K562 (cell line): ENCODE measurements at regions of chr9 and their contacts with region 1.

Region 1: GRCh38 chr9:131053896-131054295 is 42.4 kb upstream of the AIF1L start:
- DNase-seq: no peak
- ATAC-seq: no peak
- H3K4me3 ChIP-seq: no peak overlapping the region
- H3K27ac ChIP-seq: no peak overlapping the region
- H3K4me1 ChIP-seq: peaks cover 0 to 15% of the 10 kb centered on the region in 2 experiments; a peak in 2 of 5 replicates
- H3K27me3 ChIP-seq: peaks cover 70 to 87% of the 10 kb centered on the region in 2 experiments
- CTCF ChIP-seq: no peak
- EP300 ChIP-seq: no peak
- POLR2A ChIP-seq: no peak
- RAD21 ChIP-seq: no peak

Region 2: DNA sequence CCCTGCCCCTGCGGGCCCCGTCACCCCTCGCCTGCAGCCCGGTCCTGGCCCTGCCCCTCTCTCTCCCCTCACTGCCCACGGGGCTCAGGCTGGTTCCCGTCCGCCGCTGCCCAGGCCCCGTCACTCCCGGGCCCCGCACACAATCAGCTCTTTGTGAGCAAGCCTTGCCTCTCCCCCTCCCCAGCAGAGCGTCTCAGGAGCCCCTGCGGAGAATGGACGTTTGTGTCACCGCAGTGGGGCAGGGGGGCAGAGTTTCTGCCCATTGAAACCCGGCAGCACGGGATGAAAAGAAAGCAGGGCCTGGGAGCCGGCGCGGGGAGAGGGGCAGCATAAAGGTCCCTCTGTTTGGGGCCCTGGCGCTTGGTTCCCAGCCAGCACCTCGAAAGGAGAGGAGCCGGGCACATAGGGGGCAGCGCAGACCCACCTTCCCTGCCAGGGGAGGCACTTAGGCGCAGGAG is 58.0 kb after region 1 on chr9:
- CTCF ChIA-PET with region 1: interaction called, 6 read pairs
- POLR2A ChIA-PET with region 1: interaction called, 3,336 read pairs
- in situ Hi-C with region 1: no loop called
- intact Hi-C with region 1: loop called (anchors 2 kb)
- DNase-seq: peak in 1 of 4 experiments; percentile 63
- ATAC-seq: no peak; the same call in 2 of the 3 replicates
- H3K4me3 ChIP-seq: no peak overlapping the region
- H3K27ac ChIP-seq: no peak overlapping the region
- H3K4me1 ChIP-seq: peaks cover 0 to 18% of the 10 kb centered on the region in 2 experiments; a peak in 2 of 5 replicates
- H3K27me3 ChIP-seq: peaks cover 89 to 98% of the 10 kb centered on the region in 2 experiments
- CTCF ChIP-seq: no peak
- EP300 ChIP-seq: no peak
- POLR2A ChIP-seq: no peak
- RAD21 ChIP-seq: no peak

Region 3: DNA sequence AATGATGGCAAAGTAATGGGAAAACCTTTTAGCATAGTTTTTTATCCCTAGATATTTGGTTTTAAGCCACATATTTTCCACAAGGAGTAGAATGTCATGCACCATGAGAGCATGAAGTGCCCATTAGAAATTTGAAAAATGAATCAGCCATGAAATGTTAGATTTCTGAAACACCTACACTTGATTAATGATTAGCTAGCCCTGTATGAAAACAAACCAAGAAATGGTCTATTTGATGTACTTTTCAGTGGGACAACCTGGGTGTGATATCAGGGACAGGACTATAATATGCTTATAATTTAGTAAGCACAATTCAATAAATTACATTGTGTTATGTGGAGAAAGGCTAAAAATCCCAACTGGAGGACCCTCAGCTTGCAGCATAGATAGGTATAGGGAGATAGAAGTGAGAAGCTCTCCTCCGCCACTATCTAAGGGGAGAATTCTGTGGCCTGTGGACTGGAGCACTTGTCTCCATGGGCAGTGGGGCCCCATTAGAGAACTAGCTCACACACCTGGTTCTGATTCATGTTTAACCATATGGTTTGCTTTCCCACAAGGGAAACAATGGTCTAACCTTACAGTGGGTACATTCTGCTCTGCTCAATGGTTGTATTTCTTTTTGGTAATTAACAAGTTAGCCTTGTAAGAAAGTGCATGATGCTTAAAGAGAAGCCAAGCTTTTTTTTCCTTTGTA is 106.7 kb after region 1 on chr9:
- CTCF ChIA-PET with region 1: no interaction called
- POLR2A ChIA-PET with region 1: no interaction called
- in situ Hi-C with region 1: no loop called
- intact Hi-C with region 1: loop called (anchors 2 kb)
- DNase-seq: peak in 3 of 4 experiments; percentile 68 to 81 (median 78)
- ATAC-seq: peak; percentile 13
- H3K4me3 ChIP-seq: no peak overlapping the region
- H3K27ac ChIP-seq: no peak overlapping the region
- H3K4me1 ChIP-seq: no peaks in the 10 kb centered on the region
- H3K27me3 ChIP-seq: no peaks in the 10 kb centered on the region
- CTCF ChIP-seq: no peak
- EP300 ChIP-seq: no peak
- POLR2A ChIP-seq: no peak
- RAD21 ChIP-seq: no peak

Region 4: GRCh38 chr9:131203431-131204218 is 149.7 kb after region 1 on chr9:
- CTCF ChIA-PET with region 1: interaction called, 3 read pairs
- POLR2A ChIA-PET with region 1: interaction called, 3 read pairs
- in situ Hi-C with region 1: no loop called
- intact Hi-C with region 1: loop called (anchors 1 kb)
- DNase-seq: peak; percentile 66 to 83 (median 76)
- ATAC-seq: peak; percentile 86
- H3K4me3 ChIP-seq: no peak overlapping the region
- H3K27ac ChIP-seq: no peak overlapping the region
- H3K4me1 ChIP-seq: no peaks in the 10 kb centered on the region
- H3K27me3 ChIP-seq: no peaks in the 10 kb centered on the region
- CTCF ChIP-seq: no peak
- EP300 ChIP-seq: no peak
- POLR2A ChIP-seq: no peak
- RAD21 ChIP-seq: no peak

Region 5: GRCh38 chr9:131277910-131278701 is 224.2 kb after region 1 on chr9:
- CTCF ChIA-PET with region 1: interaction called, 3 read pairs
- POLR2A ChIA-PET with region 1: no interaction called
- in situ Hi-C with region 1: no loop called
- intact Hi-C with region 1: loop called (anchors 2 kb)
- DNase-seq: peak; percentile 100
- ATAC-seq: peak; percentile 65
- H3K4me3 ChIP-seq: peak overlapping the region; percentile 65
- H3K27ac ChIP-seq: peak overlapping the region; percentile 75
- H3K4me1 ChIP-seq: peaks cover 28 to 75% of the 10 kb centered on the region in 2 experiments
- H3K27me3 ChIP-seq: peaks cover 3 to 13% of the 10 kb centered on the region in 2 experiments; a peak in 3 of 5 replicates
- CTCF ChIP-seq: no peak; a peak in 1 of 6 replicates
- EP300 ChIP-seq: peak; percentile 40; the same call in 1 of the 2 replicates
- POLR2A ChIP-seq: no peak
- RAD21 ChIP-seq: no peak

Region 6: GRCh38 chr9:131334629-131335367 is 280.9 kb after region 1 on chr9:
- CTCF ChIA-PET with region 1: interaction called, 16 read pairs
- POLR2A ChIA-PET with region 1: interaction called, 3 read pairs
- in situ Hi-C with region 1: loop called (anchors 5 kb)
- intact Hi-C with region 1: loop called (anchors 1 kb)
- DNase-seq: peak in 3 of 4 experiments; percentile 24 to 26 (median 25)
- ATAC-seq: 0 out of 3 replicates have a peak, but pooled peaks have one; percentile 3
- H3K4me3 ChIP-seq: no peak overlapping the region
- H3K27ac ChIP-seq: no peak overlapping the region
- H3K4me1 ChIP-seq: peaks cover 21 to 45% of the 10 kb centered on the region in 2 experiments; a peak in 4 of 5 replicates
- H3K27me3 ChIP-seq: no peaks in the 10 kb centered on the region
- CTCF ChIP-seq: no peak
- EP300 ChIP-seq: no peak
- POLR2A ChIP-seq: no peak
- RAD21 ChIP-seq: no peak